ENCODE measurements at regions of chr19 and their contacts with region 1.

Region 1: GRCh38 chr19:1490311-1491113 is at the start of gene PCSK4:
- DNase-seq: peak; percentile 98 to 99
- ATAC-seq: peak; percentile 94 to 98
- H3K4me3 ChIP-seq: peak within 1 kb of the TSS; percentile 54 to 73 (median 62)
- H3K27ac ChIP-seq: peak within 1 kb of the TSS; percentile 70 to 86 (median 76)
- H3K4me1 ChIP-seq: peaks cover 5 to 9% of the 10 kb centered on the region in 2 donors
- H3K27me3 ChIP-seq: no peaks in the 10 kb centered on the region
- CTCF ChIP-seq: peak in 1 of 5 experiments; percentile 5
- POLR2A ChIP-seq: no peak
- total RNA-seq, gene PCSK4: 0.12 to 0.60 (median 0.37) TPM

Region 2: GRCh38 chr19:1507763-1508509 is 17.4 kb after region 1 on chr19:
- in situ Hi-C with region 1: no loop called
- intact Hi-C with region 1: loop called (anchors 2 kb)
- DNase-seq: peak; percentile 91 to 95
- ATAC-seq: peak; percentile 95 to 96
- H3K4me3 ChIP-seq: peak overlapping the region; percentile 42 to 68 (median 59)
- H3K27ac ChIP-seq: peak overlapping the region; percentile 82 to 99 (median 92)
- H3K4me1 ChIP-seq: peaks cover 4 to 27% of the 10 kb centered on the region in 2 donors
- H3K27me3 ChIP-seq: peaks cover 0 to 4% (median 2%) of the 10 kb centered on the region in 3 donors
- CTCF ChIP-seq: peak in 1 of 5 experiments; percentile 23
- POLR2A ChIP-seq: peak; percentile 45 to 47